Aorta (tissue), 5 donors: ENCODE measurements at regions of chr14 and their contacts with region 1.

Region 1: DNA sequence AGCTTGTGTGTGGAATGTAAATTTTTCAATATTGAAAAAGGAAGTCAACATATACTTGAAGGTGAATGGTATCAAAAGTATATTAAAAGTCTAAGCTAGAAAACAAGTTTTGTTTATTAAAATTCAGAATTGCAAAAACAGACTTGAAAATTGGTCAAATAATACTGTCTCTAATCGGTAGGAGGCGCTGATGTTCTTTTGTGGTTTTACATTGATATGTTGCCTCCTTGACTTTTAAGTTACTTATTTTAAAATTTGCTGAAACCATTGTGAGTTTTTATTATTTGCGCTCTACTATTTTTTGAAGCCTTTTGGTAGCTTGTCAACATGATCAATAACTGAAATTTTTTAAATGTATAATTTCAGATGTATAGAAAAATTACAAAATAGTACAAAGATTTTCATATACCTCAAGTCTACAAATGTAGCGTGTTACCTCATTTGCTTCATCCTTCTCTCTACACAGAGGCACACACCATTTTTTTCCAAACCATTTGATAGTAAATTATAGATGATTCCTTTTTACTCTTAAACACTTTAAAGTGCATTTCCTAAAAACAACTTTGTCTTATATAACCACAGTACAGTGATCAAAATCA is 6.9 kb downstream of the RTRAF start:
- DNase-seq: no peak
- ATAC-seq: no peak
- H3K4me3 ChIP-seq: no peak overlapping the region
- H3K27ac ChIP-seq: no peak overlapping the region
- H3K4me1 ChIP-seq: no peaks in the 10 kb centered on the region
- H3K27me3 ChIP-seq: no peaks in the 10 kb centered on the region

Region 2: DNA sequence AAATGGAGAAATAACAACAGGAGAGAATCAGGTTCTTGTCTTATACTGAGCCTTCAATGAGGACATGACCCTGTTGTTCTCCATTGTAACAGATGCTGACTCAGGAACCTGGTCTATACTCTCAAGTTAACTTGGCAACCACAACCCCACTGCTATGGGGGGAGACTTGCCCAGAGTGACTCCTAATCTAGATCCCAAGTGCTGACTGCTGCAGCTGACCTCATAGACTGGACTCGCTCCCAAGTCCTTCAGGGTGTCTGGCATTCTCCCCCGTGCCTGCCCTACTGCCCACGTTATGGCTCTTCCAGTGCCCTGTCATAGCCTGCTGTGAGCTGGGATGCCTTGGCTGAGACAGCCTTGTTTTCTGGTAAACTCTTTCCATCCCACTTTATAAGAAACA is 35.5 kb after region 1 on chr14:
- intact Hi-C with region 1: loop called in 1 of 2 experiments (anchors 5 kb)
- DNase-seq: peak; percentile 83 to 91
- ATAC-seq: peak; percentile 90
- H3K4me3 ChIP-seq: no peak overlapping the region
- H3K27ac ChIP-seq: no peak overlapping the region
- H3K4me1 ChIP-seq: peaks cover 0 to 3% of the 10 kb centered on the region in 2 donors
- H3K27me3 ChIP-seq: no peaks in the 10 kb centered on the region

Region 3: DNA sequence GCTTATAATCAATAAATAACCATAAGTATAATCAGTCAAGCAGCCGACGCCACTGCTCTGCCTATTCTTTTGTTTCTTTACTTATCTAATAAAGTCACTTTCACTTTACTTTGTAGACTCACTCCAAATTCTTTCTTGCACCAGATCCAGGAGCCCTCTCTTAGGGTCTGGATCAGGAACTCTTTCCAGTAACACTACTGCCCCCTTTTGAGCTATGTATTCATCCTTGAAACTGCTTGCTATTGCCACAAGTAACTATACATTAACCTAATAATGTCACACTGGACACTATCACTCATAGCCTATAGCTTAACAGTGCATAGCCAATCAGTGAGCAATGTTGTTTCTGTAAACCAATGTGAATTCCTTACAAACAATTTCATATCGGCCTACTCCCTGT is 75.4 kb after region 1 on chr14:
- intact Hi-C with region 1: loop called (anchors 1 to 5 kb)
- DNase-seq: no peak
- ATAC-seq: no peak
- H3K4me3 ChIP-seq: no peak overlapping the region
- H3K27ac ChIP-seq: no peak overlapping the region
- H3K4me1 ChIP-seq: peaks cover 0 to 2% of the 10 kb centered on the region in 2 donors
- H3K27me3 ChIP-seq: no peaks in the 10 kb centered on the region

Region 4: DNA sequence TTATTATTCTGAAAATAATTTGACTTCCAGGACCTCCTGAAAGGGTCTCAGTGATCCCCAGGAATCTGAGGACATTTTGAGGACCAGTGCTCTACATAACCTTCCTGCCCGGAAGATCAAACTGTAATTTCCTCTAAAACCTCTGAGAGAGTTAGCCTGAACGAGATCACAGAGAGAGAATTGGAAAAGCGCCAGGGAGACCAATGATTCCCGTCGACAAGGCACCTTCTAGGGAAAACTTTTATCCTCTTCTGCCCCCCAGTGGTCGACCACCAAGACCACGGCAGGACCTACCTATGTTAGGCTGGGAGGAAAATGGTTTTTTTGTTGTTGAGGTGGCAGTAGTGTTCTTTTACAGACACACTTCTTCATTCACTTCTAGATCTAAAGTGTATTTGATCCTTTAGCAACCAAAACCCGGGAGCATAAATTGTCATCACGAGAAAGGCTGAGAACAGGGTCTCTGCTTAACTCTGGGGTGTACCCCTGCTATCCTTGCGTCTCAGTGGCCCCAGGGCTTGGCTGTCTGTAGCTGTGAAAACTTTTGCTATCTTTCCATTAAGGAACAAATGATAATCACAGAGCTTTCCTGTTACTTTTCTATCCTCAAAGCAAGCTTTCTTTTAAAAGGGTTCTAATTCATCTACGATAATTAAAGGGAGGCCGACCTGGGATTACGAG is 135.5 kb after region 1 on chr14:
- intact Hi-C with region 1: loop called (anchors 1 kb)
- DNase-seq: peak; percentile 78 to 83
- ATAC-seq: peak; percentile 77
- H3K4me3 ChIP-seq: no peak overlapping the region
- H3K27ac ChIP-seq: no peak overlapping the region
- H3K4me1 ChIP-seq: no peaks in the 10 kb centered on the region
- H3K27me3 ChIP-seq: no peaks in the 10 kb centered on the region